ENCODE measurements at regions of chr6 and their contacts with region 1.

Region 1: DNA sequence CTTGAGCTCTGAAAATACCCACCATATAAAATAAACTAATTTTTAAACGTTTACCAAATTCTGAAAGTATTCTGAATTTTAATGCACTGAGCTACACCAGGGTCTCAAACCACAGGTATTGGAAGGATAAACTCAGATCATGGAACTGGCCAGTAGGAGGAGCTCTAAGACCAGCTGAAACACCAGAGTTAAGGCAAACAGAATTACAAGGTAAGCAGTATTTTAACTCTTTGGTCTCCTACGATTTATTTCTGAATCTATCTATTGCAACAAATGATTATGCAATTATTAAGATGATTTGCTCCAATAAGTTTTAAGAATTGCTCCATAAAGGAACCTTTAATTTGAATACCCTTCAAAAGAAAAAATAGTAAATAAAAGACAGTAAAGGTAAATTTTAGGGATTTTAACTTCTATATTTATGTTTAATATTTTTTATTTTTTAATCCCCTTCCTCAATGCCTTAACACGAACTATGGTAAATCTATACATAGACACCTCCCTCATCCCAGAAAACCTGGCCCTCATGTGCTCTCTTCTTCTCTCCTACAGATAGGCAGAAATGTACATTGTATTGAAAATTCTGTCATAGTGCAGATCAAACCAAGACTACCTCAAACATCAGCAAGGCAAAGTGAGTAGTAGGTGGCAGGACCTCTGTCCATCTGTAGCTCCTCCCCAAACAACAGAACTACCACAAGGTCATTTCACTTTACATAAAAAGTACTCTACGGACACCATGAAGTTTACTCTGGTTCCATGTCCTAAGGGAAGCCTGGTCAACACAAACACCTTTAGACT is 58.4 kb downstream of the SMLR1 start:
- DNase-seq: peak; percentile 60 to 64 (median 64)
- H3K4me3 ChIP-seq: no peak overlapping the region
- H3K4me3 Mint-ChIP-seq: no peak overlapping the region
- H3K27ac ChIP-seq: no peak overlapping the region
- H3K27ac Mint-ChIP-seq: no peak overlapping the region
- H3K4me1 ChIP-seq: no peaks in the 10 kb centered on the region
- H3K4me1 Mint-ChIP-seq: peaks cover 6% of the 10 kb centered on the region
- H3K27me3 ChIP-seq: no peaks in the 10 kb centered on the region
- H3K27me3 Mint-ChIP-seq: peaks cover 0 to 3% (median 0%) of the 10 kb centered on the region in 3 donors
- CTCF ChIP-seq: peak; percentile 96

Region 2: DNA sequence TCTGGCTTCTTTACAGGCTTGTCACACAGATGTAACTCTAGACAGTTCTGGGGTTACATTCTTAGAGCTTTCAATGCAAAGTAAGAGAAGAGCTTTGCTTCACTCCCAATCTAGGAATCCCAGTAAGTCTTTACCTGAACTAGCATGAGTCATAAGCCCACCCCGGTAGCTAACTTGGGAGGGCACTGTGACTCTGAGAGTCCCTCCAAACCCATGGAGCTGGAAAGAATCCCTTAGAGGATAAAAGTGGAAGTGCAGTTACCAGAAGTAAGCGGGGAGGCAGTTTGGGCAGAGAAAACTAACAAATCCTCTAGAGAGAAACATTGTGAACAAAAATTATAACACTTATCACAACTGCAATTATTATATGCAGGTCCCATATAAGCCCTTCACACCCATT is 142.4 kb before region 1 on chr6:
- intact Hi-C with region 1: no loop called
- DNase-seq: no peak
- H3K4me3 ChIP-seq: no peak overlapping the region
- H3K4me3 Mint-ChIP-seq: no peak overlapping the region
- H3K27ac ChIP-seq: no peak overlapping the region
- H3K27ac Mint-ChIP-seq: no peak overlapping the region
- H3K4me1 ChIP-seq: no peaks in the 10 kb centered on the region
- H3K4me1 Mint-ChIP-seq: no peaks in the 10 kb centered on the region
- H3K27me3 ChIP-seq: no peaks in the 10 kb centered on the region
- H3K27me3 Mint-ChIP-seq: peaks cover 1 to 5% (median 3%) of the 10 kb centered on the region in 3 donors
- CTCF ChIP-seq: no peak

Region 3: DNA sequence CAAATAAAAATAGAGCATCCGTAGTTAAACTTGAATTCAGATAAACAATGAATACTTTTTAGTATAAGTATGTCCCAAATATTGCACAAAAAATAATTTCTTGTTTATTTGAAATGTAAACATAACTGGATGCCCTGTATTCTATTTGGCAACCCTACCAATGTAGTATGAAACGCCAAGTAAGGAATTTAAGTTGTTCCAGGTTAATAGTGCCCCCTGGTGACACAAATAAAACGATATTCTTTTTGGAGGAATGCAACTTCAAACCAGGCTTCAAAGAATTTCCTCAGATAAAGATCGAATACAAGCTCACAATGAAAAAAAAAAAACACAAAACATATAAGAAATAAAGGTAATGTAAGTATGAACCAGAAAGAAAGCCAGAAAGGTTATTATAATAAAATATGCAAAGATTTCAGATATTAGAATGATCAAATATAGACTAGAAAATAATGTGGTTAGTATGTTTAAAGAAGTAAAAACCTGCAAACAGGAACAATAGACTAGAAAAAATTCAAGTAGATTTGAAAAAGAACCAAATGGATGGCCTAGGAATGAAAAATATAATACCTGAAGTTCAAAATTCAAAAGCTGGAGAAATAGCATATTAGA is 231.3 kb after region 1 on chr6:
- intact Hi-C with region 1: loop called (anchors 5 kb)
- DNase-seq: peak; percentile 18 to 21 (median 21)
- H3K4me3 ChIP-seq: no peak overlapping the region
- H3K4me3 Mint-ChIP-seq: no peak overlapping the region
- H3K27ac ChIP-seq: no peak overlapping the region
- H3K27ac Mint-ChIP-seq: no peak overlapping the region
- H3K4me1 ChIP-seq: peaks cover 5 to 8% of the 10 kb centered on the region in 2 donors
- H3K4me1 Mint-ChIP-seq: peaks cover 11% of the 10 kb centered on the region
- H3K27me3 ChIP-seq: no peaks in the 10 kb centered on the region
- H3K27me3 Mint-ChIP-seq: peaks cover 0 to 1% (median 0%) of the 10 kb centered on the region in 3 donors
- CTCF ChIP-seq: peak; percentile 57

Region 4: DNA sequence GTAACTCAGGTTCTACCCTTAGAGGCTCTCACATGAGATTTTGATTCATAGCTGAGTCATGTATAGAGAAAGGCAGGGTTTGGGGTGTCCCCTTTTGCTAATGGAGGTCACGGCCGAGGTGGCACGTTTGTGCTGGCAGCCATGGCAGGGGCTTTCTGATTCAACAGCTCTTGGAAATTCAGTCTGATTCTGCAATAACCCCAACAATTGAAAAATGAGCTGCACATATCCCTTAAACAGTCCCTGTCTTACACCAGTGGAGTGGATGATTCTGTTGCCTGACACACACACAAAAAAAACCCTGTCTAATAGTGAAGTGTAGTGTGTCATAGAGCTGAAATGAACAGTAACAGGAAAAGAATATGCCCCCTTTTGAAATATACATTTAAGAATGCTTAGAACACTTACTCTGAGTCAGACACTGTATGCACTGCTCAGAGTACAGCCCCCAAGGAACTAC is 647.0 kb after region 1 on chr6:
- intact Hi-C with region 1: loop called (anchors 5 kb)
- DNase-seq: no peak
- H3K4me3 ChIP-seq: no peak overlapping the region
- H3K4me3 Mint-ChIP-seq: no peak overlapping the region
- H3K27ac ChIP-seq: no peak overlapping the region
- H3K27ac Mint-ChIP-seq: no peak overlapping the region
- H3K4me1 ChIP-seq: no peaks in the 10 kb centered on the region
- H3K4me1 Mint-ChIP-seq: peaks cover 8% of the 10 kb centered on the region
- H3K27me3 ChIP-seq: no peaks in the 10 kb centered on the region
- H3K27me3 Mint-ChIP-seq: no peaks in the 10 kb centered on the region
- CTCF ChIP-seq: no peak

Region 5: DNA sequence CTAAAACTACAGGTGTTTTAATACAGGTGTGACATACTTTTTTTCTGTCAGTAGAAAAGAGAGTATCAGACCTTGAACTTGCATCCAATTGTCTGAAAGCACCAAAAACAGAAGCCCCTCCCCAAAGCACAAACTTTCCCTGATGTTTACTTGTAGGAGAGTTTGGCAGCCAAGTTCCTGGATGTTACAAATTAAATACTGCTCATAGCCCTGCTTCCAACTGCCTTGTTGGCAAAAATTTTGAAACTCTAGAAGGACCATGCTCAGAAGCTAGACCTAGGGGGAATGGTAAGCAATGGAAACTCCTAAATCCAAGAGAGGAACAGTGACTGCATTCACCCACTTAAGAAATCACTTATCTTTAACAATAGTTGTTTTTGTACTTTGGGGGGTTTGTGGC is 670.4 kb after region 1 on chr6:
- intact Hi-C with region 1: no loop called
- DNase-seq: no peak
- H3K4me3 ChIP-seq: no peak overlapping the region
- H3K4me3 Mint-ChIP-seq: no peak overlapping the region
- H3K27ac ChIP-seq: no peak overlapping the region
- H3K27ac Mint-ChIP-seq: no peak overlapping the region
- H3K4me1 ChIP-seq: no peaks in the 10 kb centered on the region
- H3K4me1 Mint-ChIP-seq: no peaks in the 10 kb centered on the region
- H3K27me3 ChIP-seq: no peaks in the 10 kb centered on the region
- H3K27me3 Mint-ChIP-seq: peaks cover 0 to 4% (median 0%) of the 10 kb centered on the region in 3 donors
- CTCF ChIP-seq: no peak

Measured in CD14-positive monocyte (primary cell).